K562 (cell line): ENCODE measurements at regions of chr7 and their contacts with region 1.

Region 1: GRCh38 chr7:116145245-116145852 is 65.0 kb upstream of the TES start:
- DNase-seq: no peak
- ATAC-seq: no peak
- H3K4me3 ChIP-seq: no peak overlapping the region
- H3K27ac ChIP-seq: no peak overlapping the region
- H3K4me1 ChIP-seq: no peaks in the 10 kb centered on the region
- H3K27me3 ChIP-seq: no peaks in the 10 kb centered on the region
- CTCF ChIP-seq: no peak
- EP300 ChIP-seq: no peak
- POLR2A ChIP-seq: no peak
- RAD21 ChIP-seq: no peak

Region 2: GRCh38 chr7:116030651-116031276 is 114.6 kb before region 1 on chr7 and contains the start of gene TFEC:
- CTCF ChIA-PET with region 1: no interaction called
- POLR2A ChIA-PET with region 1: no interaction called
- in situ Hi-C with region 1: no loop called
- intact Hi-C with region 1: no loop called
- DNase-seq: no peak
- ATAC-seq: no peak
- H3K4me3 ChIP-seq: no peak within 1 kb of the TSS
- H3K27ac ChIP-seq: no peak within 1 kb of the TSS
- H3K4me1 ChIP-seq: no peaks in the 10 kb centered on the region
- H3K27me3 ChIP-seq: no peaks in the 10 kb centered on the region
- CTCF ChIP-seq: no peak
- EP300 ChIP-seq: no peak
- POLR2A ChIP-seq: no peak
- RAD21 ChIP-seq: no peak
- polyA plus RNA-seq, gene TFEC: 0.01 TPM in 1 of 2 experiments, not detected in the other

Region 3: DNA sequence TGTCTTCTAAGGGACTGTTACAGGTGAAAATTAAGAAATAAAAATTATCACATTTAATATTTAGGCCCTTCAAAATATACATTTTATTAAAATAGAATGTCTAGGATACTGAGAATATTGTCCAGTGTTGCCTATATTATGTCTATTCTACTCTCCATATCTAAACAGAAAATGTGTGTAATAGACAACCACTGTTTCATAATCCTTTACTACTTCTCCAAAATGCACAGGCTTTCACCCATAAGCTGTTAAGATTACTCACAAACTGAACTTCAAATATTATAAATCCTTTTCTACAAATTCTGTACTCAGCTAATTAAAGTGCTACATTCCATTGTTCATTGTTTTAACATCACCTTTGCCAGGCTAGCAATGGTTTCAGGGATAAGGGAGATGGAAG is 58.1 kb before region 1 on chr7:
- CTCF ChIA-PET with region 1: no interaction called
- POLR2A ChIA-PET with region 1: no interaction called
- in situ Hi-C with region 1: no loop called
- intact Hi-C with region 1: loop called (anchors 10 kb)
- DNase-seq: no peak
- ATAC-seq: no peak
- H3K4me3 ChIP-seq: no peak overlapping the region
- H3K27ac ChIP-seq: no peak overlapping the region
- H3K4me1 ChIP-seq: no peaks in the 10 kb centered on the region
- H3K27me3 ChIP-seq: no peaks in the 10 kb centered on the region
- CTCF ChIP-seq: no peak
- EP300 ChIP-seq: no peak
- POLR2A ChIP-seq: no peak
- RAD21 ChIP-seq: no peak